Ovary (tissue), 10 donors: ENCODE measurements at regions of chr1 and their contacts with region 1.

Region 1: DNA sequence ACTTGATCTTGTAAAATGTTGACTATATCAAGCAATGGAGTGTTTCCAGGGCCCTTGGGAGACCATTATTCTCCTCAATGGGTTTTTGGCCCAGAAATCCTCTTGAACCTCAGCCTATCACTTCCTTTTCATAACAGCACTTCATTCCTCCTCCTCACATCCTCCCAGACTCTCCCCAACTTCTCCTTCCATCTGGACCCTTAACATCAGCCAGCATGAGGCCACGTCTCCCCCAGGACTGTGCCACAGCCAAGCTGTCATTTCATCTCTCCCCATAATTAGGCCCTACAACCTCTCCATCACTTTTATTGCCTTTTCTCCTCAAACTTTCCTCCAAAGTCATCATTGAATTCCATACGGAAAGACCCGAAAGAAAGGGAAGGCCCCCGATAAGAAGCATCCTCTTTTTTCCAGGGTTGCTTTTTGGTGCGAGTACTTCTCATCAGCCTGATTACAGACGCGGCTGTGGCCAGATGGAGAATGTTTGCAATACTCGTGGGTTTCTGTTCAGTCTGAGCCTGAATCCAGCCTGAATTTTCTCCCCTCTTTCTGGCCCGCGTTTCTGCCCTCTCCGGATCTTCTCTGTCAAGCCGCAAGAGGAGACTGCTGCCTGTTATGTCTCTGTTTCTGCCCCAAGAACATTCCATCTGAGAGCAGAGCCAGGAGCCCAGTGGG is 52.7 kb upstream of the SLC25A33 start:
- DNase-seq: no peak
- H3K4me3 ChIP-seq: no peak overlapping the region
- H3K27ac ChIP-seq: no peak overlapping the region
- H3K4me1 ChIP-seq: peaks cover 18% of the 10 kb centered on the region
- H3K27me3 ChIP-seq: no peaks in the 10 kb centered on the region
- CTCF ChIP-seq: no peak
- EP300 ChIP-seq: no peak
- POLR2A ChIP-seq: no peak

Region 2: GRCh38 chr1:9269078-9269501 is 217.5 kb before region 1 on chr1:
- intact Hi-C with region 1: loop called (anchors 2 to 5 kb)
- DNase-seq: no peak
- H3K4me3 ChIP-seq: no peak overlapping the region
- H3K27ac ChIP-seq: no peak overlapping the region
- H3K4me1 ChIP-seq: peaks cover 3% of the 10 kb centered on the region
- H3K27me3 ChIP-seq: no peaks in the 10 kb centered on the region
- CTCF ChIP-seq: no peak
- EP300 ChIP-seq: no peak
- POLR2A ChIP-seq: no peak

Region 3: DNA sequence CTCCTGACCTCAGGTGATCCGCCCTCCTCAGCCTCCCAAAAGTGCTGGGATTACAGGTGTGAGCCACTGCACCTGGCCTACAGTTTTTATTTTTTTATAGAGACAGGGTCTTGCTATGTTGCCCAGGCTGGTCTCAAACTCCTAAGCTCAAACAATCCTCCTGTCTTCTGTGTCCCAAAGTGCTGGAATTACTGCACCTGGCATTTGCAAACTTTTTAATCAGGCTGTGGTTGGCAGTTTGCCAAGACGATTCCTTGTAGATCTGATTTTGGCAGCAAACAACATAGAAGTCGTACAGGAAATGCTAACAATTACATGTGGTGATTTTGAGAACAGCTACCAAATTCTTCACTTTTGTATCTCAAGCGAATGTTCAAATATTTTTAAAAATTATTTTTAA is 520.6 kb after region 1 on chr1:
- intact Hi-C with region 1: no loop called
- DNase-seq: no peak
- H3K4me3 ChIP-seq: no peak overlapping the region
- H3K27ac ChIP-seq: no peak overlapping the region
- H3K4me1 ChIP-seq: no peaks in the 10 kb centered on the region
- H3K27me3 ChIP-seq: no peaks in the 10 kb centered on the region
- CTCF ChIP-seq: no peak
- EP300 ChIP-seq: no peak
- POLR2A ChIP-seq: no peak